Activated naive CD4-positive, alpha-beta T cell treated with anti-CD3 and anti-CD28 coated beads for 36 hours (primary cell): ENCODE measurements at regions of chr17 and their contacts with region 1.

Region 1: DNA sequence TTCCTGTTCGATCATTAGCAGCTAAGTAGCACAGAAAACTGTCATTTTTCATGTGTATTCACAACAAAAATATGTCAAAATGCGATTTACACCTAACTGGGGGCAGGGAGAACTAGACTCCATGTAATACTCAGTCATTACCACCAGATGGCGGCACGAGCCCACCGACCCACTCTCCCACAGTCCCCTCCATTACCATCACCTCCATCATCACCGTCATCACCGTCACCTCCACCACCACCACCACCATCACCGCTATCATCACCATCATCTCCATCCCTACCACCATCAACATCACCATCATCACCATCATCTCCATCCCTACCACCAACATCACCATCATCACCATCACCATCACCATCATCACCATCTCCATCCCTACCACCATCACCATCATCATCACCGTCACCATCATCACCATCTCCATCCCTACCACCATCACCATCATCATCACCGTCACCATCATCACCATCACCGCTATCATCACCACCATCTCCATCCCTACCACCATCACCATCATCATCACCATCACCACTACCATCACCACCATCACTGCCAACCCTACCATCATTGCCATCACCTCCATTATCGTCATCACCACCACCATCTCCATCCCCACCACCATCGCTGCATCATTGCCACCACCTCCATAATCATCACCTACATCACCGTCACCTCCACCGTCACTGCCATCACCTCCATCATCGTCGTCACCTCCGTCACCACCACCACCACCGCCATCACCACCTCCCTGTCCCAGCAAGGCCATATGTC is 14.4 kb downstream of the NDUFAF8 start:
- DNase-seq: peak; percentile 68
- H3K4me3 Mint-ChIP-seq: no peak overlapping the region
- H3K27ac Mint-ChIP-seq: no peak overlapping the region
- H3K4me1 Mint-ChIP-seq: peaks cover 5% of the 10 kb centered on the region
- H3K27me3 Mint-ChIP-seq: no peaks in the 10 kb centered on the region

Region 2: DNA sequence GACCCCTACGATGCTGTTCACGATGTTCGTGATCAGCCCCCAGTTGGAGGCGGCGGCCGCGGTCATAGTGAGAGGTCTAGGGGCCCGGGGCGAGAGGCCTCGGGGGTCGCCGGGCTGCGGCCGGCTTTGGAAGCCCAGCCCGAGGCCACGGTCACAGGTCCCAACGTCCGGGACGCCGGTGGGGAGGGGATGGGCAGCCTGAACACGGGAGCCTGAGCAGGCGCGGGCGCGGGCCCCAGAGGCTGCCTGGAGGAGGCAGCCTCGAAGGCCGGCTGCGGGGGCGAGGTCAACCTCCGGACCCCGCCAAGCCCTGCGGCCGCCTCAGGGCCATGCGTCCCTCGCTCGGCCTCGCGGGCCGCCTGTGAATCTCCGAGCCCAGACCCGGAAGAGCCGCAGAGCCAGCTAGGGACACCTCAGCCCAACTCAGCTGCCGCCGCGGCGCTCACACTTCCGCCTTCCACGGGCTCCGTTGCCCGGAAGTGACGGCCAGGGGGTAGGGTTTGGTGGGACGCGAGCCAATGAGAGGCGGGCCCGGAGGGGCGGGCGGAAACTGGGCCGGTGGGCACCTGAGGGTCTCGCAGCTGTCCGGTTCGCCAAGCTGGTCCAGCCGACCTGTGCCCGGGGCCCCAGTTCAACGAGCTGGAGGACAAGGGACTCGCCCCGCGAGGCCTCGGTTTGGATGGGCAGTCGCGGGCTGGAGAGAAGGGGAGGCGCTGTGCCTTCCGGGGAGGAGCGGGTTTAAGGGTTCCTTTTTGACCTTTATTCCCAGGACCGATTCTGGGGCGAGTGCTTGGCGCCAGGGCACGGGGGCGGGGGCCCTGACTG is 41.5 kb after region 1 on chr17 and contains the start of gene SLC38A10:
- CTCF ChIA-PET with region 1: interaction called, 9 read pairs
- intact Hi-C with region 1: loop called (anchors 2 kb)
- DNase-seq: peak; percentile 95
- H3K4me3 Mint-ChIP-seq: peak within 1 kb of the TSS; percentile 92
- H3K27ac Mint-ChIP-seq: peak within 1 kb of the TSS; percentile 91
- H3K4me1 Mint-ChIP-seq: peaks cover 36% of the 10 kb centered on the region
- H3K27me3 Mint-ChIP-seq: no peaks in the 10 kb centered on the region
- total RNA-seq, gene SLC38A10: 29.1 to 31.9 TPM